Heart right ventricle (tissue), 16 donors: ENCODE measurements at regions of chr20 and their contacts with region 1.

Region 1: DNA sequence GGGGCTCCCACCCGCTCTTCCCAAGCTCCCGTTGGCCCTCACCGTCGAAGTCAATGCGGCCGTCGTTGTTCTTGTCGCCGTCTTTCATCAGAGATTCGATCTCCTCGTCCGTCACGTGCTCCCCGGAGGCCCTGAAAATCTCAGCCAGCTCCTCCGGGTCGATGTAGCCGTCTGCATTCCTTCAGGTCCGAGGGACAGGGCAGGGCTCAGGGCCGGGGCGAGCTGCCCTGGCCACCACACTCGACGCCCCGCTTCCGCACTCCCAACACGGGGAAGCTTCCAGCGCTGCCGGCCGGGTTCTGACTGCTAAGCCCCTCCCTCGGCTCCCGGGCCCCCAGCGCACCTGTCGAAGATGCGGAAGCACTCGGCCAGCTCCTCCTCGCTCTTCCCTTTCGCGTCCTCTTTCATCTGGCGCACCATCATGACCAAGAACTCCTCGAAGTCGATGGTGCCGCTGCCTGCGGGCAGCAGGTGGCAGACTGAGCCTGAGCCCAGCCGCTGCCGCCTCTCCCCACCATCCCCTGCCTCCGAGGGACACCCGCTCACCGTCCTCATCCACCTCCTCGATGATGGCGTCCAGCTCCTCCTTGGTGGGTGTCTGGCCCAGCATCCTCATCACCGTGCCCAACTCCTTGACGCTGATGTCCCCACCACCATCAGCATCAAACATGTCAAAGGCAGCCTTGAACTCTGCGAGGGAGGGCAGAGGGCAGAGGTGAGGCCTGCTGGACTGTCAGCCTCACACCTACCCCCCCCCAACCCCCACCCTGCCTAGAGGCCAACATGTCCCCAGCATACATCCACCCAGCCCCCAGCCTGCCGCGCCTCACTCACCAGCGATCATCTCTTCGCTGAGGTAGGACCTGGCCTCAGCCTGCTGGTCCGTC is 2.9 kb downstream of the TNNC2 start:
- DNase-seq: peak in 1 of 2 donors; percentile 60
- ATAC-seq: peak; percentile 57 to 76 (median 67)
- H3K4me3 ChIP-seq: peak overlapping the region in 5 of 10 donors; percentile 3 to 30 (median 28)
- H3K27ac ChIP-seq: no peak overlapping the region
- H3K4me1 ChIP-seq: peaks cover 4 to 40% (median 26%) of the 10 kb centered on the region in 9 donors
- H3K27me3 ChIP-seq: peaks cover 3 to 53% (median 35%) of the 10 kb centered on the region in 7 donors
- CTCF ChIP-seq: peak; percentile 5 to 61 (median 49)

Region 2: DNA sequence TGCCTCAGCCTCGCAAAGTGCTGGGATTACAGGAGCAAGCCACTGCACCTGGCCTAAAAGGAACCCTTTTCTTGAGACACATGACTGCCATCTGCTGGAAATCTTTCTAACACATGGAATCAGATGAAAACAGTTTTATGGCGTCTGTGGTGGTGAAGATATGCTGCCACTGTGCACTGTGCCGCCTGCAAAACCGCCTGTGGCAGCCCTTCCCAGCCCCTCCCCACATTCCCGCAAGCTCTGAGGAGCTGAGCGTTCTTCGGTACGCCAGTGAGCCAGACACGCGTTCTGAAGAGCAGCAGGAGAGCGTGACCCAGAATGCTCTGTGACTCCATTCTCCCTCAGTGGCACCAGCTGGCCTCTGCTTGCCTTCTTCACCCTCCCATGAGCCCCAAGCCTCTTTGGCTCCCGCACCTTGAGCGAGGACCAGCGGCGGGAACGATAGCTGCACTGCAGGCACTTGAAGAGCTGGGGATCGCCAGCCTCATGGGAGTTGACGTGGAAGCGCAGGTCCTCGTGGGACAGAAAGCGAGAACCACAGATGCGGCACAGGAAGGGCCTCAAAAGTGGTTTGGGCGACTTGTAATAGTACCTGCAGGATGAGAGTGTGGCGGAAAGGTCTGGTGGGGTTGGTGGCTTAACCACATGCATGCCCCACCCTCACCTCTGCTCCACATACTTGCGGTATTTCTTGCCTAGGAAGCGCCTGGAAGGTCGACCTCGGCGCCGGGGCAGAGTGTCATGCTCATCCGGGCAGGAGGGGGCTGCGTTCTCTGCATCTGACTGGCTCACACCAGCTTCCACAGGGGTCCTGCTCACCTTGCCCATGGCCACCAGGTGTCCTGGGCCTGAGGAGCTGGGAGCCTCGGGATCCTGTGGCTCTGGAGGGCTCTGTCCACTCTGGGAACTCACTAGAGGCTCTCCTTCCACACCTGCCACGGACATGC is 139.1 kb after region 1 on chr20:
- intact Hi-C with region 1: loop called in 5 of 10 experiments (anchors 5 to 10 kb)
- DNase-seq: no peak
- ATAC-seq: peak in 3 of 8 donors; percentile 6 to 20 (median 13)
- H3K4me3 ChIP-seq: no peak overlapping the region
- H3K27ac ChIP-seq: no peak overlapping the region
- H3K4me1 ChIP-seq: peaks cover 0 to under 1% (median 0%) of the 10 kb centered on the region in 9 donors
- H3K27me3 ChIP-seq: no peaks in the 10 kb centered on the region
- CTCF ChIP-seq: peak in 7 of 9 donors; percentile 21 to 54 (median 40)

Region 3: GRCh38 chr20:46128310-46129151 is 304.3 kb after region 1 on chr20:
- intact Hi-C with region 1: no loop called
- DNase-seq: peak; percentile 24 to 35
- ATAC-seq: peak in 5 of 8 donors; percentile 19 to 58 (median 38)
- H3K4me3 ChIP-seq: no peak overlapping the region
- H3K27ac ChIP-seq: no peak overlapping the region
- H3K4me1 ChIP-seq: peaks cover 0 to 31% (median 24%) of the 10 kb centered on the region in 9 donors
- H3K27me3 ChIP-seq: peaks cover 0 to 28% (median 0%) of the 10 kb centered on the region in 7 donors
- CTCF ChIP-seq: peak; percentile 31 to 70 (median 63)